CD14-positive monocyte (primary cell): ENCODE measurements at regions of chr18 and their contacts with region 1.

Region 1: DNA sequence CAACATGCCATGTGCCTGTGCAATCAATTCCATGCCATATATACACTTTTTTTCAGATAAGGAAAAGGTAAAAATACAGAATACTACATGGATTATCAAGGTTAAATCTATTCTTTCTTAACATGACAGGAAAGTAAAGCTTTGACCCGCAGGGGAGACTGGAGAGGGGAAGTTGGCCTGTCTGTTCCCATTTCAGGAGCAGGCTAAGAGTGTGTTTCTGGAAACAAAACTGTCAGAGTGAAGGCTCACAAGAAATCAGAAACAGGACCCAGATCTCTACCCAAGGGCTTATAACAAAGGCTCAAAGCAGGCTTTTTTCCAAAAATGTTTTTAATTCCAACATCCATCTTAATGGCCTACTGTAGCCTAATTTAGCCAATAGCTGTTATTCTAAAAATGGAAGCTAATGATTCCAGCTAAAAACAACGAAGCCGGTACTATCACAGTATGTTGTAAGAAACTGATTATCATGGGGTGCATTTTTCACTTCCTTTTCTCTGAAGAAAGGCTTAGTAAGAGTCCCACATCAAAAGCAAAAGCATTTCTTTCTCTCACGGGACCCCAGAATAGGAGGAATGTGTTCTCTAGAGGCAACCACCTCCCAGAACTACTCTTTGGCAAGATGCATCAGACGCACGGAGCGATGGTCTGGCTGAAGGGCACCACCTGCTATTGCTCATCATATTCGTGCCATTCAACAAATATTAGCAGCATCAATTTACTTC is 41.4 kb downstream of the FECH start:
- DNase-seq: peak; percentile 57 to 71 (median 62)
- H3K4me3 ChIP-seq: peak overlapping the region in 2 of 3 experiments; percentile 8 to 64
- H3K4me3 Mint-ChIP-seq: peak overlapping the region; percentile 53 to 79
- H3K27ac ChIP-seq: peak overlapping the region; percentile 39 to 77
- H3K27ac Mint-ChIP-seq: peak overlapping the region; percentile 65 to 86 (median 82)
- H3K4me1 ChIP-seq: peaks cover 20 to 21% of the 10 kb centered on the region in 2 donors
- H3K4me1 Mint-ChIP-seq: peaks cover 19% of the 10 kb centered on the region
- H3K27me3 ChIP-seq: no peaks in the 10 kb centered on the region
- H3K27me3 Mint-ChIP-seq: peaks cover 0 to 2% (median 0%) of the 10 kb centered on the region in 3 donors
- CTCF ChIP-seq: no peak

Region 2: GRCh38 chr18:57437766-57438671 is 107.1 kb before region 1 on chr18:
- intact Hi-C with region 1: no loop called
- DNase-seq: peak in 2 of 3 donors; percentile 11 to 25
- H3K4me3 ChIP-seq: peak overlapping the region in 1 of 3 experiments; percentile 32
- H3K4me3 Mint-ChIP-seq: peak overlapping the region in 1 of 2 donors; percentile 92
- H3K27ac ChIP-seq: no peak overlapping the region
- H3K27ac Mint-ChIP-seq: no peak overlapping the region
- H3K4me1 ChIP-seq: peaks cover 38 to 47% of the 10 kb centered on the region in 2 donors
- H3K4me1 Mint-ChIP-seq: peaks cover 61% of the 10 kb centered on the region
- H3K27me3 ChIP-seq: peaks cover 89 to 93% of the 10 kb centered on the region in 2 donors
- H3K27me3 Mint-ChIP-seq: peaks cover 92 to 95% (median 95%) of the 10 kb centered on the region in 3 donors
- CTCF ChIP-seq: peak; percentile 35

Region 3: GRCh38 chr18:57581302-57581934 is 36.3 kb after region 1 on chr18:
- intact Hi-C with region 1: loop called in 1 of 2 experiments (anchors 2 kb)
- DNase-seq: peak; percentile 61 to 73 (median 71)
- H3K4me3 ChIP-seq: peak overlapping the region in 1 of 3 experiments; percentile 45
- H3K4me3 Mint-ChIP-seq: peak overlapping the region; percentile 24 to 71
- H3K27ac ChIP-seq: peak overlapping the region; percentile 56 to 73
- H3K27ac Mint-ChIP-seq: peak overlapping the region; percentile 50 to 87 (median 77)
- H3K4me1 ChIP-seq: peaks cover 23 to 29% of the 10 kb centered on the region in 2 donors
- H3K4me1 Mint-ChIP-seq: peaks cover 27% of the 10 kb centered on the region
- H3K27me3 ChIP-seq: no peaks in the 10 kb centered on the region
- H3K27me3 Mint-ChIP-seq: peaks cover 0 to 2% (median 1%) of the 10 kb centered on the region in 3 donors
- CTCF ChIP-seq: no peak